Thyroid gland (tissue), 4 donors: ENCODE measurements at regions of chr19 and their contacts with region 1.

Region 1: GRCh38 chr19:52237771-52238400 is 31.5 kb upstream of the ZNF766 start:
- DNase-seq: peak; percentile 55 to 58
- H3K4me3 ChIP-seq: no peak overlapping the region
- H3K27ac ChIP-seq: no peak overlapping the region
- H3K4me1 ChIP-seq: no peaks in the 10 kb centered on the region
- H3K27me3 ChIP-seq: no peaks in the 10 kb centered on the region
- CTCF ChIP-seq: peak; percentile 68 to 85 (median 82)
- POLR2A ChIP-seq: no peak

Region 2: DNA sequence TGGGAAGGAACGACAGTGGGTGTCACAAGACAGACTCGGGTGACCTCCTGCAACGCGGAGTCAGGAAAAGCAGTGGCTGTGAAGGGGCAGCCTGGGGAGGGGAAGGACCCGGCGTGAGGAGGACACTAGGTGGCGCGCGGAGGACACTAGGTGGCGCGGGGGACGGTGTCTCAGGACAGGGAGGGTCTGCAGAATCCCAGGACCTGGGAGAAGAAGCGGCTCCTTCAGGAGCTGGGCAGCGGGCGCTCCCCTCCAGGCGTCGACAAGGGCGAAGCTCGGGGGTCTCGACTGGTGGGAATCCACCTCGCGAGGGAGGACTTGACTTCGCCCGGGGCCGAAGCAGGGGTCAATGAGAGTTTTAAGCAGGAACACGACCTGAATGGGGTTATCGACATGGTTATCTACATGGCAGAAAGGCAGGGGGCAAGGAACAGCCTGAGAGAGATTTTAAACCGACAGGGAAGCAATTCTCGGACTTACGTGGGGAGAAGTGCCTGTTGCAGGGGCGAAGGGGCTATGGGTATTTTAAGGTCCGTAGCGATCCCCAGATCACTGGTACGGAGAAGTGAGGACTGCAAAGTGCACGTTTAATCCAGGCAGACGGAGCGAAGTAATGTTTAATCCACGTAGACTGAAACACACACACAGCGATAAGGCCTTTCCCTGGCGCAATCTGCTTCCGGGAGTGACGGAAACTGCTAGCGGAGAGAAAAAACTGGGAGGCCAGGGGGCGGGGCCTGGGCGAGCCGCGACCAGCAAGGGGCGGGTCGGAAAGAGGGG is 98.4 kb before region 1 on chr19 and contains the start of gene ZNF616:
- intact Hi-C with region 1: loop called (anchors 2 kb)
- DNase-seq: peak; percentile 97 to 98
- H3K4me3 ChIP-seq: peak within 1 kb of the TSS; percentile 64 to 87 (median 73)
- H3K27ac ChIP-seq: peak within 1 kb of the TSS; percentile 75 to 92 (median 89)
- H3K4me1 ChIP-seq: peaks cover 0 to 10% of the 10 kb centered on the region in 2 donors
- H3K27me3 ChIP-seq: no peaks in the 10 kb centered on the region
- CTCF ChIP-seq: peak; percentile 50 to 85 (median 80)
- POLR2A ChIP-seq: peak in 1 of 2 donors; percentile 78
- total RNA-seq, gene ZNF616: 11.0 to 14.1 (median 13.2) TPM

Region 3: GRCh38 chr19:52189735-52190486 is 48.0 kb before region 1 on chr19 and contains the start of gene PPP2R1A:
- intact Hi-C with region 1: no loop called
- DNase-seq: peak; percentile 100
- H3K4me3 ChIP-seq: peak within 1 kb of the TSS; percentile 84 to 91 (median 84)
- H3K27ac ChIP-seq: peak within 1 kb of the TSS; percentile 93 to 99 (median 96)
- H3K4me1 ChIP-seq: peaks cover 25 to 33% of the 10 kb centered on the region in 2 donors
- H3K27me3 ChIP-seq: no peaks in the 10 kb centered on the region
- CTCF ChIP-seq: no peak
- POLR2A ChIP-seq: peak in 1 of 2 donors; percentile 68
- total RNA-seq, gene PPP2R1A: 120 to 272 (median 258) TPM

Region 4: DNA sequence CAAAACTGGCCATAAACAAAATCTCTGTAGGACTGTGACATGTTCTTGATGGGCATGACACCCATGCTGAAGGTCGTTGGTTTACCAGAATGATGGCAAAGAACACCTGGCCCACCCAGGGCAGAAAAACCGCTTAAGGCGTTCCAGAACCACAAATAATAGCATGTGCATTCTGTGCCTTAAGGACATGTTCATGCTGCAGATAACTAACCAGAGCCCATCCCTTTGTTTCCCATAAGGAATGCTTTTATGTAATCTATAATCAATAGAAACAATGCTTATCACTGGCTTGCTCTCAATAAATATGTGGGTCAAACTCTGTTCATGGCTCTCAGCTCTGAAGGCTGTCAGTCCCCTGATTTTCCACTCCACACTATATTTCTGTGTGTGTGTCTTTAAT is 204.3 kb after region 1 on chr19:
- intact Hi-C with region 1: no loop called
- DNase-seq: no peak
- H3K4me3 ChIP-seq: no peak overlapping the region
- H3K27ac ChIP-seq: no peak overlapping the region
- H3K4me1 ChIP-seq: no peaks in the 10 kb centered on the region
- H3K27me3 ChIP-seq: no peaks in the 10 kb centered on the region
- CTCF ChIP-seq: no peak
- POLR2A ChIP-seq: no peak